Activated T-helper 2 cell treated with anti-CD3 and anti-CD28 coated beads, Interferon-gamma antibody, Interleukin-2, Interleukin-4, amounts not matched to agents 10 μg/mL and 5 μg/mL and 100 μg/mL, durations not matched to agents 14 hours and 24 hours and 36 hours (primary cell): ENCODE measurements at regions of chr5 and their contacts with region 1.

Region 1: GRCh38 chr5:81301271-81302015 is at the start of gene ZCCHC9:
- DNase-seq: peak; percentile 90
- H3K4me3 Mint-ChIP-seq: peak within 1 kb of the TSS; percentile 92
- H3K27ac Mint-ChIP-seq: peak within 1 kb of the TSS; percentile 95
- H3K4me1 Mint-ChIP-seq: peaks cover 46% of the 10 kb centered on the region
- H3K27me3 Mint-ChIP-seq: no peaks in the 10 kb centered on the region
- total RNA-seq, gene ZCCHC9: 43.4 and 46.9 TPM in 2 replicates

Region 2: DNA sequence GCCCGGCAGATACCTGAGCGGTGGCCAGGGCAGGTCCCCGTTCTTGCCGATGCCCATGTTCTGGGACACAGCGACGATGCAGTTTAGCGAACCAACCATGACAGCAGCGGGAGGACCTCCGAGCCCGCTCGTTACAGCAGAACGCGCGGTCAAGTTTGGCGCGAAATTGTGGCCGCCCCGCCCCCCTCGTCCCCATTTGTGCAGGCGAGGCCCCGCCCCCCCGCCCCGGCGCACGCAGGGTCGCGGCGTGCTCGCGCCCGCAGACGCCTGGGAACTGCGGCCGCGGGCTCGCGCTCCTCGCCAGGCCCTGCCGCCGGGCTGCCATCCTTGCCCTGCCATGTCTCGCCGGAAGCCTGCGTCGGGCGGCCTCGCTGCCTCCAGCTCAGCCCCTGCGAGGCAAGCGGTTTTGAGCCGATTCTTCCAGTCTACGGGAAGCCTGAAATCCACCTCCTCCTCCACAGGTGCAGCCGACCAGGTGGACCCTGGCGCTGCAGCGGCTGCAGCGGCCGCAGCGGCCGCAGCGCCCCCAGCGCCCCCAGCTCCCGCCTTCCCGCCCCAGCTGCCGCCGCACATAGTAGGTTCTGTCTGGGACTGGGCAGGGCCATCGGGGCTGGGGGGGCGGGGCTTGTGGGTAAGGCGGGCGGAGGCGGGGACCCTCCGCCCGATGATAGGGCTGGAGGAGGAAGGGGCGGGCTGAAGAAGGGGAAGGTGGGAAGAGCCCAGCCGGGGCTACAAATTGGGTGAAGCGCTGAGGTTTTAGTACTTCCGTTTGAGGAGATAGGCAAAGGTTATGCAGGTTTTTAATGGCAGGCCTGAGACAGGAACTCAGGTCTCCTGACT is 646.8 kb before region 1 on chr5 and contains the starts of genes DHFR and MSH3:
- intact Hi-C with region 1: loop called (anchors 2 kb)
- DNase-seq: peak; percentile 85
- H3K4me3 Mint-ChIP-seq: peak within 1 kb of the TSS; percentile 88
- H3K27ac Mint-ChIP-seq: peak within 1 kb of the TSS; percentile 96
- H3K4me1 Mint-ChIP-seq: peaks cover 20% of the 10 kb centered on the region
- H3K27me3 Mint-ChIP-seq: no peaks in the 10 kb centered on the region
- total RNA-seq, gene DHFR: 55.7 and 56.9 TPM in 2 replicates
- total RNA-seq, gene MSH3: 20.6 and 21.2 TPM in 2 replicates

Region 3: DNA sequence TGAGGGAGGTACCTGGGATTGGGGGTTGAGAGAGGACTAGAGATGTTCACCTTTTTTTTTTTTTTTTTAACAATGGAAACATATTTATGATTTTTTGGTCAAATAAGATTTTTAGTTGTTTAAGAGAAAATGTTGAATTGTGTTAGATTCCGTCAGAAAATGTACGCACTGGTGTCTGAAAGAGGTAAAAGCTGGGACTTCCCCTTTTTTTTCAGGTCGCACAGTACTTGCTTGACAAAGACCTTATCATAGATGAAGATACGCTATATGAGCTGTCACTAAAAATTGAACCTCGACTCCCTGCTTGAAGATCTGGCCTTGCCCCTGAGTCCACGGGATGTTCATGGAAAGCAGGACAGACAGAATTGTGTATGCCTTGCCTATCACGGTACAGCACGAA is 76.0 kb before region 1 on chr5:
- intact Hi-C with region 1: loop called (anchors 5 kb)
- DNase-seq: no peak
- H3K4me3 Mint-ChIP-seq: no peak overlapping the region
- H3K27ac Mint-ChIP-seq: no peak overlapping the region
- H3K4me1 Mint-ChIP-seq: no peaks in the 10 kb centered on the region
- H3K27me3 Mint-ChIP-seq: no peaks in the 10 kb centered on the region

Region 4: GRCh38 chr5:81326554-81326953 is 25.1 kb after region 1 on chr5:
- intact Hi-C with region 1: no loop called
- DNase-seq: no peak
- H3K4me3 Mint-ChIP-seq: no peak overlapping the region
- H3K27ac Mint-ChIP-seq: no peak overlapping the region
- H3K4me1 Mint-ChIP-seq: no peaks in the 10 kb centered on the region
- H3K27me3 Mint-ChIP-seq: peaks cover 8% of the 10 kb centered on the region

Region 5: DNA sequence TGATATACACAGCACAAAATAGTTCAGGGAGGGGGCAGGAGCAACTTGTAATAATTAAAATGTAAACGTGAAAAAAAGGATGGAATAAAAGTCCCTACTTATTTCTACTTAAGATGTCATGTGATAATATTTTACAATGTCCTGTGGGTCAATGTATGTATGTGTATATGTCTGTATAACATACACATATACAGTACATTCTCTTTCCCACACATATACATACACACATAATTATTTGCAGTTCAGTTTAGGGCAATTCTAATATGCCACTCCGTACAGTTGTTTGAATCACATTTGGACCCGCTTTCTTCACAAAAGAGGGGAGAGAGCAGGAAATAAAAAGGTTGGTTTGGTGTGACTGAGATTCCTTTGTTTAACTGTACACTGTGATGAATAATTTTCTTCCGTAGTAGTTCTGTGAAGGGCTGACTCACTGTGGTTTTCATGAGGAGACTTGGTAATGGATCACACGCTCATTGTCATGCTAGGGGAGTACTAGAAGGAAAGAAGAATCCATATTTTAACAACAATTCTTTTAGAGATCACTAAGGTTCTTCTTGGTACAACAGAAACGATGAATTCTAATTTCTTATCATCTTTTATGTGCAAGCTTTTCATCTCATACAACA is 118.7 kb after region 1 on chr5:
- intact Hi-C with region 1: loop called (anchors 5 kb)
- DNase-seq: no peak
- H3K4me3 Mint-ChIP-seq: no peak overlapping the region
- H3K27ac Mint-ChIP-seq: peak overlapping the region; percentile 83
- H3K4me1 Mint-ChIP-seq: peaks cover 35% of the 10 kb centered on the region
- H3K27me3 Mint-ChIP-seq: no peaks in the 10 kb centered on the region

Region 6: GRCh38 chr5:82107267-82107666 is 805.8 kb after region 1 on chr5:
- intact Hi-C with region 1: loop called (anchors 10 kb)
- DNase-seq: no peak
- H3K4me3 Mint-ChIP-seq: no peak overlapping the region
- H3K27ac Mint-ChIP-seq: no peak overlapping the region
- H3K4me1 Mint-ChIP-seq: peaks cover 22% of the 10 kb centered on the region
- H3K27me3 Mint-ChIP-seq: no peaks in the 10 kb centered on the region